PC-9 (cell line): ENCODE measurements at regions of chr14 and their contacts with region 1.

Region 1: DNA sequence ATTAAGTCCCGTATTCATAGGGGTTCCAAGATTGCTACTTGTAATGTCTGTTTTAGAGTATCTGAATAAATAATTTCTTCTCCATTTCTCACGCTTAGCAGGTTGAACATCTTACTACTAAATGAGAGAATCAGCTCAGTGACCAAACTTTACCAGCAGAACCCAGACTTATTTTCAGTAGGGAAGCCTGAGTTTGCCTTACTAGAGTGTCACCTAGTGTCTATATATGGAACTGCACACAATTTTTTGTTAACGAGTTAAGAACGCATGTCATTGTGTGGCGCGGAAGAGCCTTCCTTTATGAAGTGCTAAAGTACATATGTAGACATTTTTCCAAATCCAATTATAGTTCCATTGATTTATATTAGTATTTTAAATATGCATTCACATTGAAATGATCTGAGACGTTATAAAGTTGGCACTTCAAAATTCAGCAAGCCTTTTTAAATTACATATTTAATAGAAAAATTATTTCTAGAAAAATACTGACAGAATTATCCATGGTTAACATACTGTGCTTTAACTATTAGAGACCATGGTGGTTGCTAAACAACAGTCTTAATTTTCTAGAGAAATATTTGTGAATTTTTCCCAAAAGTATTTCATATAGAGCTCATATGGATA is 88.3 kb downstream of the RPS29 start:
- DNase-seq: peak in 1 of 2 experiments; percentile 57
- H3K4me3 ChIP-seq: no peak overlapping the region
- H3K27ac ChIP-seq: no peak overlapping the region
- H3K4me1 ChIP-seq: 0 out of 2 replicates have a peak, but pooled peaks cover 2% of the 10 kb centered on the region
- H3K27me3 ChIP-seq: no peaks in the 10 kb centered on the region
- CTCF ChIP-seq: peak; percentile 92

Region 2: DNA sequence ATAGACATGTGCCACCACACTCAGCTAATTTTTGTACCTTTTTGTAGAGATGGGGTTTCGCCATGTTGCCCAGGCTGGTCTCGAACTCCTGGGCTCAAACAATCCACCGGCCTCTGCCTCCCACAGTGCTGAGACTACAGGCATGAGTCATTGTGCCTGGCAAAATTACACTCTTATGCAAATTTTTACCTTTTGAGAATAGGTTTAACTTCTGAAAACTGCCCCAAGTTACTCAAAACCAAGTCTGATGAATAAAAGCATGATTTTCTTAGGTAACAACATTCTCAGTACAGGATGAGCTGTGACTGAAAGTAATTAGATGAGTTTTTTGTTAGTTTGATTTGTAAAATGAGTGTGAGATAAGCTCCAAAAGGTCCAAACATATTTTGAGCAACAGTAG is 77.6 kb before region 1 on chr14:
- CTCF ChIA-PET with region 1: no interaction called
- POLR2A ChIA-PET with region 1: no interaction called
- intact Hi-C with region 1: no loop called
- DNase-seq: no peak
- H3K4me3 ChIP-seq: no peak overlapping the region
- H3K27ac ChIP-seq: no peak overlapping the region
- H3K4me1 ChIP-seq: no peaks in the 10 kb centered on the region
- H3K27me3 ChIP-seq: no peaks in the 10 kb centered on the region
- CTCF ChIP-seq: no peak

Region 3: DNA sequence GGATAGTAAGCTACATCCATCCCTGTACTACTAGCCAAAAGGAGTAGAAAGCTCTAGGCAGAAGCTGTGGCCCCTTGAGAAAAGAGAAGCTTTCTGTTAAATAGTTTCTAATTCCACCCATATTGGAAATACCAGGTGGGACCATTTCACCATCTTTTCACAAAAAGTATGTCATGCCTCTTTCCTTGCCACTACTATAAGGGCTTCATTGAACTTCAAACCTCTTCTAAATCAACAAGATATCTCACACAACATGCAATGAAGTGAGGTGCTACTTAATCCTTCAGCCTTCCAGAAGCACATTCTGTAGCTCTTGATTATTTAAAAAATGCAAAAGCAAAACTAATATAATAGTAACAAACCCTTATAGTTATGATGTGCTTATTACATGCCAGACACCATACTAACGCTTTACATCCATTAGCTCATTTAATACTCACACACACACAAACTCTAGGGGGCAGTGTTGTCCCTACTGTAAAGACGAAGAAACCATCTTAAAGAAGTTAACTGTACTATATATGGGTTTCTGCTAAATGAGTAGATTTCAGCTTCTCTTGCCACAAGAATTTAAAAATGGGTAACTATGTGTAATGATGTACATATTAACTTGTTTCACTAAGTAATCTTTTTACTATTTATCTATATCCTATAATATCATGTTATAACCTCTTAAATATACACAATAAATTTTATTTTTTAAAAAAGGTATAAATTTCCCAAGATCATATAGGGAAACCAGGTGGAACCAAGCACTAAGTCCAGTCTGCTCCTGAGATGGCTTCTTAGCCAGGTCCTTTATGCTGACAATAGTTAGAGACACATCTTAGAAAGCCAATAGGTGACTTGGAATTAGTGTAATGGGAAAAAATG is 36.1 kb before region 1 on chr14:
- CTCF ChIA-PET with region 1: interaction called, 14 read pairs
- POLR2A ChIA-PET with region 1: no interaction called
- intact Hi-C with region 1: loop called (anchors 2 kb)
- DNase-seq: peak; percentile 43 to 67
- H3K4me3 ChIP-seq: no peak overlapping the region
- H3K27ac ChIP-seq: no peak overlapping the region
- H3K4me1 ChIP-seq: no peaks in the 10 kb centered on the region
- H3K27me3 ChIP-seq: no peaks in the 10 kb centered on the region
- CTCF ChIP-seq: peak; percentile 84

Region 4: GRCh38 chr14:50222061-50222613 is 724.3 kb after region 1 on chr14:
- CTCF ChIA-PET with region 1: no interaction called
- POLR2A ChIA-PET with region 1: no interaction called
- intact Hi-C with region 1: no loop called
- DNase-seq: no peak
- H3K4me3 ChIP-seq: no peak overlapping the region
- H3K27ac ChIP-seq: no peak overlapping the region
- H3K4me1 ChIP-seq: peaks cover 12% of the 10 kb centered on the region; the same call in 1 of the 2 replicates
- H3K27me3 ChIP-seq: no peaks in the 10 kb centered on the region
- CTCF ChIP-seq: no peak